IMR-90 (cell line): ENCODE measurements at regions of chr17 and their contacts with region 1.

Region 1: DNA sequence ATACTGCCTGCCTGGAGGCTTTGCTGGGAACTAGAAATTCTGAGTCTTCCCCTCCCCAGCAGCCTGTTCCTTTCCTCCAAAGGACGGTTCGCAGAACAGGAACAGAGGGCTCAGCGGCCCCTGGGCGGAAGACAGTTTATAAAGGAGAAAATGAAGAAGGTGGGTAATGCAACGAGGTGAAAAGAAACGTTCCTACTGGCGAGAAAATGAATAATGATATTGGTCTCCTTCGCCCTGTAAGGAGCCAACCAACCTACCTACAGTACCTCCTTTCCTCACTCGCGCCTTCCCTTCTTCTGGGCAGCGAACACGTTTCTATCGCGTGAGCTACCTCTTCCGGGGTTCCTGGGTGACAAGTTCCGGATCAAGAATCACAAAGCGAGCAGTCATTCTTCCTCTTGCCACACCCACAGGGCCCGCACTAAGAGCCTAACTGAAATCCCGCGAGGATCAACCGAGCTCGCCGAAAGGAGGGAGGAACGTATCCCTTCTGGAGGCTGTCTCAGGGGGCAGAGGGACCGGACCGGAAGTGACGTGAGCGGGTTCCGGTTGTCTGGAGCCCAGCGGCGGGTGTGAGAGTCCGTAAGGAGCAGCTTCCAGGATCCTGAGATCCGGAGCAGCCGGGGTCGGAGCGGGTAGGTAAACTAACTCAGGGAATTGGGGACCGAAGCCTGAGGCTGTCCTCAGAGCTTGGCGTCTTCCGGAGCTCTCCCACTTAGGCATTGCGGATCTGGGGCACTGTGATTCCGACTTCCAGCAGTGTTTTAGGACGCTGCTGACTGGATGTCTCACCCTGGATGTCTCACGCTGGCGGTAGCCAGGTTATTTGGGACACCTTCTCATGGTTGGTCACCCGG is at the starts of genes PTRH2 and VMP1:
- DNase-seq: peak; percentile 100
- ATAC-seq: peak; percentile 97
- H3K4me3 ChIP-seq: peak within 1 kb of the TSS; percentile 68
- H3K27ac ChIP-seq: peak within 1 kb of the TSS; percentile 81
- H3K4me1 ChIP-seq: no peaks in the 10 kb centered on the region
- H3K27me3 ChIP-seq: no peaks in the 10 kb centered on the region
- CTCF ChIP-seq: no peak
- POLR2A ChIP-seq: peak; percentile 96
- RAD21 ChIP-seq: no peak
- total RNA-seq, gene PTRH2: 24.9 and 41.7 TPM in 2 replicates
- total RNA-seq, gene VMP1: 197 and 272 TPM in 2 replicates

Region 2: DNA sequence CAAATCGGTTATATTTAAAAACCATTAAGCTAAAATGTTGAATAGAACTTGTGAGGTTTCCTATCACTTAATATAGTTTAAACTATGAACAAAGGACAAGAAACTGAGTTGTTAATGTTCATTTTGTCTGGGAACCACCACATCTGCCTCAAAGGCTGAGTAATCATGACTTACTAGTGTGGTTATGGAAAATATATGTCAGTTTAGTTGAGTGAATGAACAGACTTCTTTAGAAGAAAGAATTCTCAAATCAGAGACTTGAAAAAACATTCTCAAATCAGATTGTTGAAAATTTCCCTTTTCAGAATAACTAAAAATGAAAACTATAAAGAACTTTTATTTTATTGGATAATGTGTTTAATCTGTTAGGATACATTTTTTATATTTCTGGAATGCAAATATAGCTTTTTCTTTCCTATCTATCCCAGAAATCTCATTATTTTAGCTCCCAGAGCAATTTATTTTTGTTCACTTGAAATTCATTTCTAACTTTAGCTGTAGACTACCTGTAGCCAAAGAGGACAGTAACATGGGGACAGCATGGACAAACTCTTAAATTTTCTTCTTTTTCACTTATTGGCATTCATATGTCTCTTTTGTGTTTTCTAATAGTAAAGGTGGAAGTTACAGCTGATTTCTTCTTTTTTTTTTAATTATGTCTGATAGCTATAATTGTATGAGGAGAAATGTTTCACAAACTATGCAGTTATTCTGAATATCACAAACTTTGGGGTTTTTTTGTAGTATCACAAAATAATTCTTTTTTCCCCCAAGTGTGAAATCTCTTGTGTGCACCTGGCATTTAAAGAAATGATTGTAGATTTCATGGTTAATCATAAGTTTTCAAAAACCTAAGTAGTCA is 55.4 kb after region 1 on chr17:
- CTCF ChIA-PET with region 1: no interaction called
- POLR2A ChIA-PET with region 1: no interaction called
- dilution Hi-C with region 1: no loop called
- in situ Hi-C with region 1: no loop called
- intact Hi-C with region 1: no loop called
- DNase-seq: peak; percentile 89
- ATAC-seq: no peak
- H3K4me3 ChIP-seq: no peak overlapping the region
- H3K27ac ChIP-seq: peak overlapping the region; percentile 70; the same call in 1 of the 2 replicates
- H3K4me1 ChIP-seq: peaks cover 21% of the 10 kb centered on the region
- H3K27me3 ChIP-seq: no peaks in the 10 kb centered on the region
- CTCF ChIP-seq: no peak
- POLR2A ChIP-seq: peak; percentile 13; the same call in 1 of the 2 replicates
- RAD21 ChIP-seq: no peak

Region 3: GRCh38 chr17:59846394-59847165 is 139.2 kb after region 1 on chr17:
- CTCF ChIA-PET with region 1: no interaction called
- POLR2A ChIA-PET with region 1: interaction called, 22 read pairs
- dilution Hi-C with region 1: no loop called
- in situ Hi-C with region 1: no loop called
- intact Hi-C with region 1: loop called (anchors 5 kb)
- DNase-seq: peak; percentile 94
- ATAC-seq: no peak
- H3K4me3 ChIP-seq: no peak overlapping the region
- H3K27ac ChIP-seq: peak overlapping the region; percentile 90
- H3K4me1 ChIP-seq: peaks cover 16% of the 10 kb centered on the region
- H3K27me3 ChIP-seq: no peaks in the 10 kb centered on the region
- CTCF ChIP-seq: no peak
- POLR2A ChIP-seq: peak; percentile 63
- RAD21 ChIP-seq: no peak